ENCODE measurements at regions of chr21 and their contacts with region 1.

Region 1: GRCh38 chr21:33514229-33514628 is 22.7 kb upstream of the DNAJC28 start:
- DNase-seq: no peak
- ATAC-seq: no peak
- H3K4me3 Mint-ChIP-seq: no peak overlapping the region
- H3K27ac Mint-ChIP-seq: no peak overlapping the region
- H3K4me1 Mint-ChIP-seq: no peaks in the 10 kb centered on the region
- H3K27me3 Mint-ChIP-seq: no peaks in the 10 kb centered on the region
- CTCF ChIP-seq: no peak

Region 2: GRCh38 chr21:32958288-32959002 is 555.8 kb before region 1 on chr21:
- CTCF ChIA-PET with region 1: no interaction called
- POLR2A ChIA-PET with region 1: no interaction called
- intact Hi-C with region 1: no loop called
- DNase-seq: no peak
- ATAC-seq: no peak
- H3K4me3 Mint-ChIP-seq: no peak overlapping the region
- H3K27ac Mint-ChIP-seq: no peak overlapping the region
- H3K4me1 Mint-ChIP-seq: no peaks in the 10 kb centered on the region
- H3K27me3 Mint-ChIP-seq: peaks cover 73% of the 10 kb centered on the region
- CTCF ChIP-seq: no peak

Region 3: GRCh38 chr21:33531007-33531406 is 16.8 kb after region 1 on chr21:
- CTCF ChIA-PET with region 1: no interaction called
- POLR2A ChIA-PET with region 1: no interaction called
- intact Hi-C with region 1: loop called (anchors 2 kb)
- DNase-seq: no peak
- ATAC-seq: no peak
- H3K4me3 Mint-ChIP-seq: no peak overlapping the region
- H3K27ac Mint-ChIP-seq: no peak overlapping the region
- H3K4me1 Mint-ChIP-seq: no peaks in the 10 kb centered on the region
- H3K27me3 Mint-ChIP-seq: no peaks in the 10 kb centered on the region
- CTCF ChIP-seq: no peak